Naive thymus-derived CD4-positive, alpha-beta T cell (primary cell): ENCODE measurements at regions of chr22 and their contacts with region 1.

Region 1: GRCh38 chr22:23240639-23241389 is 60.5 kb downstream of the BCR start:
- DNase-seq: peak in 1 of 9 donors; percentile 46
- ATAC-seq: peak; percentile 10
- H3K4me3 ChIP-seq: no peak overlapping the region
- H3K4me3 Mint-ChIP-seq: peak overlapping the region in 9 of 10 donors; percentile 29 to 84 (median 32)
- H3K27ac ChIP-seq: peak overlapping the region; percentile 84
- H3K27ac Mint-ChIP-seq: peak overlapping the region; percentile 74 to 96 (median 88)
- H3K4me1 ChIP-seq: peaks cover 51 to 76% of the 10 kb centered on the region in 2 donors
- H3K4me1 Mint-ChIP-seq: peaks cover 60 to 98% (median 87%) of the 10 kb centered on the region in 7 donors
- H3K27me3 ChIP-seq: no peaks in the 10 kb centered on the region
- H3K27me3 Mint-ChIP-seq: no peaks in the 10 kb centered on the region

Region 2: GRCh38 chr22:22684580-22685561 is 555.9 kb before region 1 on chr22:
- CTCF ChIA-PET with region 1: no interaction called
- POLR2A ChIA-PET with region 1: no interaction called
- intact Hi-C with region 1: no loop called
- DNase-seq: no peak
- ATAC-seq: peak; percentile 35
- H3K4me3 ChIP-seq: no peak overlapping the region
- H3K4me3 Mint-ChIP-seq: no peak overlapping the region
- H3K27ac ChIP-seq: no peak overlapping the region
- H3K27ac Mint-ChIP-seq: no peak overlapping the region
- H3K4me1 ChIP-seq: no peaks in the 10 kb centered on the region
- H3K4me1 Mint-ChIP-seq: peaks cover 0 to 3% (median 0%) of the 10 kb centered on the region in 7 donors
- H3K27me3 ChIP-seq: no peaks in the 10 kb centered on the region
- H3K27me3 Mint-ChIP-seq: peaks cover 0 to 4% (median 0%) of the 10 kb centered on the region in 5 donors

Region 3: DNA sequence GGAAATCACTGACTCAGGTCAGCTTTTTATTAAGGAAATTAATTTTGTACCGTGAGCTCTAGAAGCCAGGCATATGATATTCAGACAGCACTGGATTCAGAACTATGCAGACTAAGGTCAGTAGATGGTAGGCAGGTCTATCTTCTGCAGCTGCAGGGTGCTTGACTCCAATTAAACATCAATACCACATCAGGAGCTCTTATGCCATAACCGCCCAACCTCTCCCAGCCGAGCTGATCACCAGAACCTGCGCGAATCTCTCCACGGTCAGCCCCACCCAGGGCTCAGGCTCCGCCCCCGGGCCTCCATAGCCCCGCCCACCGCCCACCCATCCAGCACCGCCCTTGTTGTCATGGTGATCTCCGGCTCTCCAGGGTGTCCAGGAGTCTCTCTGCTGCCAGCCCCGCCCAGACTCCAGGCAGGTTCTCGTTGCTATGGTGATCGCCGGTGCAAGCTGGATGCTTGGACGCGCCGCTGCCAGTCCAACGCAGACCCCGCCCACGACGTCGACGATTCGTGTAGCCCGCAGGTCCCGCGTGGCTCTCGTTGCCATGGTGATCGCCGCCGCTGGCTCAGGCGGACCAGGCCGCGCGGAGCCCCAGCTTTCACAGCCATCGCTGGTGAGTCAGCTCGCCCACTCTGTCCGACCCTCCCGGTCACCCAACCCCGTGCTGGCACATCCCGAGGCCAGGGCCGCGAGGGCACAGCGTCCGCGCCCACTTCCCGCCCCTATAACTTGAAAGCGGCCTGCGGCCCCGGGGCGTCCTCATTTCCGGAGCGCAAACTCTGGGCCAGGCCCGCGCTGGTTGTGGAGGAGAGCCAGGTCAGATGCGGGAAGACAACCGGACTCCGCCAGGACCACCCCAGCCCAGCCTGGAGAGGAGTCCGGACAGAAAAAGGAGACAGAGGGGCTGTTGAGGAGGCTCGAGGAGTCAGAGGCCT is 95.6 kb before region 1 on chr22 and contains the start of gene RAB36:
- CTCF ChIA-PET with region 1: interaction called, 3 read pairs
- POLR2A ChIA-PET with region 1: no interaction called
- intact Hi-C with region 1: loop called (anchors 1 kb)
- DNase-seq: peak; percentile 77 to 93 (median 81)
- ATAC-seq: peak; percentile 78
- H3K4me3 ChIP-seq: peak within 1 kb of the TSS; percentile 25
- H3K4me3 Mint-ChIP-seq: peak within 1 kb of the TSS; percentile 72 to 84 (median 82)
- H3K27ac ChIP-seq: peak within 1 kb of the TSS; percentile 78
- H3K27ac Mint-ChIP-seq: peak within 1 kb of the TSS; percentile 79 to 96 (median 93)
- H3K4me1 ChIP-seq: peaks cover 38 to 45% of the 10 kb centered on the region in 2 donors
- H3K4me1 Mint-ChIP-seq: peaks cover 27 to 60% (median 49%) of the 10 kb centered on the region in 7 donors
- H3K27me3 ChIP-seq: no peaks in the 10 kb centered on the region
- H3K27me3 Mint-ChIP-seq: peaks cover 0 to 20% (median 0%) of the 10 kb centered on the region in 5 donors
- total RNA-seq, gene RAB36: 0.10 to 1.2 (median 0.38) TPM

Region 4: DNA sequence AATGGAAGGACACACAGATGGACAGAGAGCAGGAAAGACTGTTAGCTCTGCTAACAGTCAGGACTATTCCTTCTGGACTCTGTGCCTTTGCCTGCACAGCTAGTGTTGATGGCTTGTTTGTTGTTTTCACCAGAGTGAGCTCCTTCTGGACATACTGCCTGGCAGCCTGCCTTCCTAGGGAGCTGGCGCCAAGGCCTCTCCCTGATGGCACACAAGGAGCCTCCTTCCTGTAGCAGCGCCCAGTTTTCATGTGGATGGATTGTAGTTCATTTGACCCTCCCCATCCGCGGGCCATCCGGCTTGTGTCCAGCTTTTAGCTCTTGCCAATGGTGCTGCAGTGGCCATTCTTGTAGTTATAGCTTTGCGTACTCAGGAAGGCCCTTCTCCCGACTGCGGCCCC is 77.1 kb before region 1 on chr22:
- CTCF ChIA-PET with region 1: no interaction called
- POLR2A ChIA-PET with region 1: no interaction called
- intact Hi-C with region 1: no loop called
- DNase-seq: no peak
- ATAC-seq: no peak
- H3K4me3 ChIP-seq: no peak overlapping the region
- H3K4me3 Mint-ChIP-seq: no peak overlapping the region
- H3K27ac ChIP-seq: no peak overlapping the region
- H3K27ac Mint-ChIP-seq: no peak overlapping the region
- H3K4me1 ChIP-seq: no peaks in the 10 kb centered on the region
- H3K4me1 Mint-ChIP-seq: no peaks in the 10 kb centered on the region
- H3K27me3 ChIP-seq: no peaks in the 10 kb centered on the region
- H3K27me3 Mint-ChIP-seq: no peaks in the 10 kb centered on the region

Region 5: GRCh38 chr22:23219822-23220484 is 20.9 kb before region 1 on chr22:
- CTCF ChIA-PET with region 1: interaction called, 6 read pairs
- POLR2A ChIA-PET with region 1: interaction called, 10 read pairs
- intact Hi-C with region 1: loop called (anchors 1 kb)
- DNase-seq: peak in 2 of 9 donors; percentile 35 to 62
- ATAC-seq: peak; percentile 72
- H3K4me3 ChIP-seq: peak overlapping the region; percentile 29
- H3K4me3 Mint-ChIP-seq: peak overlapping the region; percentile 78 to 94 (median 88)
- H3K27ac ChIP-seq: peak overlapping the region; percentile 70
- H3K27ac Mint-ChIP-seq: peak overlapping the region; percentile 80 to 99 (median 86)
- H3K4me1 ChIP-seq: peaks cover 21 to 96% of the 10 kb centered on the region in 2 donors
- H3K4me1 Mint-ChIP-seq: peaks cover 79 to 100% (median 97%) of the 10 kb centered on the region in 7 donors
- H3K27me3 ChIP-seq: no peaks in the 10 kb centered on the region
- H3K27me3 Mint-ChIP-seq: no peaks in the 10 kb centered on the region

Region 6: DNA sequence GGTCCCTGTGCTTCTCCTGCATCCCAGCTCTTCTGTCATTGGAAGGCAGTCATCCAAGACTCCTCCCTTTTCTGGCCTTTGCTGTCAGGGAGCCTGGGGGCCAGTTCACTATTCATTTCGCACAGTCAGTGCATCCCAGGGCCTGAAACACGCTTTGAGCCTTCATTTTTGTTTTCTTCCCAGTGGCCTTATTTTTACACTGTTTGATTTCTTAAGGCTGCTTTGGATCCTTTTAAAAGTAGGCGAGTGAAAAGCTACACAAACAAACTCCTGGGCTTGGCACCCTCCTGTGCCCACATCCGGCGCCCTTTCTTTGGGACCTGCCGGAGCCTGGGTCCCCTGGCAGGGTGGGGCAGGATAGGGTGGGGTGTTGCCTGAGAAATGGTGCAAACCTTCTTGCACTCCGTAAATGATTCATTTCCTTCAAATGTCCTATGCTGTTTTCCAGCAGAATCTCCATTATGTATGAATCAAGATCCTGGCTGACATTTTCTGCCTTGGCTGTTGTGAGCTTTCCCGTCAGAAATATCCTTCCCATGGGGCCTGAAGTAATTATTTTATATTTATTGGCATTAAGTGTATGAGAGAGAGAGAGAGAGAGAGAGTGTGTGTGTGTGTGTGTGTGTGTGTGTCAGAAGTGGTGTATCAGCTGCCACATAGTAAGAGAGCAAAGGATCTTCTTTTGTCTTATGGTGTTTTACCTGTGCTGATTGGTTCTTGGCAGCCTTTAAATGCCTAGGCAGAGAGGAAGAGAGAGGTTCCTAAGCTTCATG is 14.9 kb before region 1 on chr22:
- CTCF ChIA-PET with region 1: interaction called, 6 read pairs
- POLR2A ChIA-PET with region 1: interaction called, 16 read pairs
- intact Hi-C with region 1: loop called in 1 of 2 experiments (anchors 1 kb)
- DNase-seq: peak in 7 of 9 donors; percentile 59 to 84 (median 73)
- ATAC-seq: peak; percentile 81
- H3K4me3 ChIP-seq: no peak overlapping the region
- H3K4me3 Mint-ChIP-seq: peak overlapping the region; percentile 51 to 83 (median 72)
- H3K27ac ChIP-seq: peak overlapping the region; percentile 67
- H3K27ac Mint-ChIP-seq: peak overlapping the region; percentile 69 to 96 (median 82)
- H3K4me1 ChIP-seq: peaks cover 14 to 78% of the 10 kb centered on the region in 2 donors
- H3K4me1 Mint-ChIP-seq: peaks cover 62 to 99% (median 93%) of the 10 kb centered on the region in 7 donors
- H3K27me3 ChIP-seq: no peaks in the 10 kb centered on the region
- H3K27me3 Mint-ChIP-seq: no peaks in the 10 kb centered on the region

Region 7: DNA sequence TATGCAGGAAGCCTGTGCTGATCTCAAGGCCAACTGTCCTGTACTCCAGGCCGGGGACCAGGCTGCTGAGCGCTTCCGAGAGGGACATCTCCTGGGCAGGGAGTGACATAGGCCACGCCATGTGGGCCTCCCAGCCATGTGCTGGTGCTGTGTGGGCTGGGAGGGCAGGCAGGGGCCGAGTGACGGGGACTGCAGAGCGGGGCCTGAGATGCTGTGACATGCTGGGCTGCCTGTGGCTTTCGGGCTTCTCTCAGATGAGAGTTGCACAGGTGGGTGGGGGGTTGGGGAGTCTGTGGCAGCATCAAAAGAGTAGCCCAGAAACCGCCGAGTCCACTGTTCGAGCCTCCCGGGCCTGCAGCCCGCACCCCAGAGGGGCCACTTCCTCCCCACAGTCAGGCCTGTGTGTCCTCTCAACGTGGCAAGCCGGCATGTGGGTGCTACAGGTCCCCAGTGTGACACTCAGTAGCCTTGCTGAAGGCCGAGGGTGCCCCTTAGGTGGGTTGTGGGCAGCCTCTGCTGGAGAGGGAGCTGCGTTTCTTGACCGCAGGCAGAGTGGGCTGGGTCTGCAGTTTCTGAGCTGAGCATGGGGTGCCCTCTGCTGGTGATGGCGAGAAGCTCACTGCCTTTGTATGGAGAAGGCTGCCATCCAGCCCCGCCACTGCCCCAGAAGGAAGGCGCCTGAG is 40.7 kb after region 1 on chr22:
- CTCF ChIA-PET with region 1: no interaction called
- POLR2A ChIA-PET with region 1: no interaction called
- intact Hi-C with region 1: loop called (anchors 2 to 5 kb)
- DNase-seq: peak; percentile 57 to 80 (median 73)
- ATAC-seq: peak; percentile 86
- H3K4me3 ChIP-seq: no peak overlapping the region
- H3K4me3 Mint-ChIP-seq: no peak overlapping the region
- H3K27ac ChIP-seq: no peak overlapping the region
- H3K27ac Mint-ChIP-seq: no peak overlapping the region
- H3K4me1 ChIP-seq: peaks cover 7 to 27% of the 10 kb centered on the region in 2 donors
- H3K4me1 Mint-ChIP-seq: peaks cover 0 to 29% (median 9%) of the 10 kb centered on the region in 7 donors
- H3K27me3 ChIP-seq: no peaks in the 10 kb centered on the region
- H3K27me3 Mint-ChIP-seq: no peaks in the 10 kb centered on the region